CD14-positive monocyte (primary cell): ENCODE measurements at regions of chr6 and their contacts with region 1.

Region 1: GRCh38 chr6:33248925-33249731 is 22.5 kb downstream of the VPS52 start:
- DNase-seq: peak; percentile 99
- H3K4me3 ChIP-seq: peak overlapping the region; percentile 43 to 77 (median 58)
- H3K4me3 Mint-ChIP-seq: peak overlapping the region; percentile 81 to 92
- H3K27ac ChIP-seq: peak overlapping the region; percentile 92 to 93
- H3K27ac Mint-ChIP-seq: peak overlapping the region; percentile 91 to 97 (median 96)
- H3K4me1 ChIP-seq: peaks cover 24 to 29% of the 10 kb centered on the region in 2 donors
- H3K4me1 Mint-ChIP-seq: peaks cover 32% of the 10 kb centered on the region
- H3K27me3 ChIP-seq: no peaks in the 10 kb centered on the region
- H3K27me3 Mint-ChIP-seq: peaks cover 7 to 13% (median 7%) of the 10 kb centered on the region in 3 donors
- CTCF ChIP-seq: no peak

Region 2: DNA sequence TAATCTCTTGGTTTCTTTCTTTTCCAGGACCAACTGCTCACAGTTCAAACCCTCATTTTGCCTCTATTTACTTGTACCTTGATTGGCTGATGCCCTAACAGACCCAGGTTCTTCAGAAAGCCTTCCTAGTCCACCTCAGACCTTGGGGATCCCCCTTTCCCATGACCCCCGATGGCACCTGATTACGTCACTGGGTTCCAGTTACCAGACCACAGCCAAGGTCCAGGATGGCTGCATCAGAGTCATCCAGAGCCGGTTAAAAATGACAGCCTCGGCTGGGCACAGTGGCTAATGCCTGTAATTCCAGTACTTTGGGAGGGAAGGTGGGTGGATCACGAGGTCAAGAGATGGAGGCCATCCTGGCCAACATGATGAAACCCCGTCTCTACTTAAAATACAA is 244.2 kb before region 1 on chr6:
- intact Hi-C with region 1: no loop called
- DNase-seq: no peak
- H3K4me3 ChIP-seq: no peak overlapping the region
- H3K4me3 Mint-ChIP-seq: no peak overlapping the region
- H3K27ac ChIP-seq: no peak overlapping the region
- H3K27ac Mint-ChIP-seq: no peak overlapping the region
- H3K4me1 ChIP-seq: peaks cover 17 to 29% of the 10 kb centered on the region in 2 donors
- H3K4me1 Mint-ChIP-seq: peaks cover 25% of the 10 kb centered on the region
- H3K27me3 ChIP-seq: no peaks in the 10 kb centered on the region
- H3K27me3 Mint-ChIP-seq: peaks cover 5 to 15% (median 11%) of the 10 kb centered on the region in 3 donors
- CTCF ChIP-seq: no peak

Region 3: DNA sequence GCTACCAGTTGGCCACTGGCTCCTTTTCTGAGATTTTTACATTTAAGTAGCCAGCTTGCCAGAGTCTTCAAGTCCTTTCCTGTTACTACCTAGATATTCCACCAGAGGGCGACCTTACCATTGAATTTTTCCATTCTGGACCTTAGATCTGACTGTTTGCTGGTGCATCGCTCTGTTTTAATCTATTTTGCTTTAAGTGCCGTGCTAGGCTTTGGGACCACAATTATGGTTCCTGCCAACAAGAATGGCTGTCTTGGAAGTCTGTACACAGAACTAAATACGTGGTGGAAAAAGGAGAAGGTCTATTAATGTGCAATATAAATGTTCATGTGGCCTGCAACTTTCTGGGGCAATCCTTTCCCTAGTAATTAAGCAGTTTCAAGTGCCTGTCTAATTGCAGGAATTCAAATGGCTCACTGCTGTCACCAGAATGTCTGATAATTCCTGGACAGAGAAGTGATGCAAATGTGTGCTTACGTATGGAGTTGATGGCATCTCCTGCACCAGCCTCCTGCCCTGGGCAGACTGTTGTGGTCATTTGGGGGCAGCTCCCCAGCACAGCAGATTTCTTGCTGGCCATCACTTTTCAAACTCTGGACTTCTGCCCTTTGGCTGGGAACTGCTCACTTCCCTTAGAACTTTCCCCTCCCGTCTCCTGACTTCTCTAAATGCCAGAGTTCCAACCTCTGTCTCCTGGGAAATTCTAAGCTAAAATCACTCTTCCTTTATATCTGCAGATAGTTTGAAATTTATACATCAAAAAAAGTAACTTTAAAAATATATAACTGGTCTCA is 234.1 kb before region 1 on chr6:
- intact Hi-C with region 1: loop called (anchors 5 kb)
- DNase-seq: peak; percentile 79 to 82 (median 82)
- H3K4me3 ChIP-seq: no peak overlapping the region
- H3K4me3 Mint-ChIP-seq: peak overlapping the region in 1 of 2 donors; percentile 61
- H3K27ac ChIP-seq: no peak overlapping the region
- H3K27ac Mint-ChIP-seq: peak overlapping the region in 2 of 7 donors; percentile 33 to 35
- H3K4me1 ChIP-seq: peaks cover 36 to 42% of the 10 kb centered on the region in 2 donors
- H3K4me1 Mint-ChIP-seq: peaks cover 41% of the 10 kb centered on the region
- H3K27me3 ChIP-seq: no peaks in the 10 kb centered on the region
- H3K27me3 Mint-ChIP-seq: no peaks in the 10 kb centered on the region
- CTCF ChIP-seq: peak; percentile 85

Region 4: GRCh38 chr6:33118525-33119123 is 130.5 kb before region 1 on chr6:
- intact Hi-C with region 1: loop called (anchors 5 kb)
- DNase-seq: peak; percentile 37 to 78 (median 64)
- H3K4me3 ChIP-seq: no peak overlapping the region
- H3K4me3 Mint-ChIP-seq: no peak overlapping the region
- H3K27ac ChIP-seq: no peak overlapping the region
- H3K27ac Mint-ChIP-seq: no peak overlapping the region
- H3K4me1 ChIP-seq: peaks cover 32 to 37% of the 10 kb centered on the region in 2 donors
- H3K4me1 Mint-ChIP-seq: peaks cover 40% of the 10 kb centered on the region
- H3K27me3 ChIP-seq: peaks cover 17 to 21% of the 10 kb centered on the region in 2 donors
- H3K27me3 Mint-ChIP-seq: peaks cover 25 to 35% (median 29%) of the 10 kb centered on the region in 3 donors
- CTCF ChIP-seq: peak; percentile 93

Region 5: DNA sequence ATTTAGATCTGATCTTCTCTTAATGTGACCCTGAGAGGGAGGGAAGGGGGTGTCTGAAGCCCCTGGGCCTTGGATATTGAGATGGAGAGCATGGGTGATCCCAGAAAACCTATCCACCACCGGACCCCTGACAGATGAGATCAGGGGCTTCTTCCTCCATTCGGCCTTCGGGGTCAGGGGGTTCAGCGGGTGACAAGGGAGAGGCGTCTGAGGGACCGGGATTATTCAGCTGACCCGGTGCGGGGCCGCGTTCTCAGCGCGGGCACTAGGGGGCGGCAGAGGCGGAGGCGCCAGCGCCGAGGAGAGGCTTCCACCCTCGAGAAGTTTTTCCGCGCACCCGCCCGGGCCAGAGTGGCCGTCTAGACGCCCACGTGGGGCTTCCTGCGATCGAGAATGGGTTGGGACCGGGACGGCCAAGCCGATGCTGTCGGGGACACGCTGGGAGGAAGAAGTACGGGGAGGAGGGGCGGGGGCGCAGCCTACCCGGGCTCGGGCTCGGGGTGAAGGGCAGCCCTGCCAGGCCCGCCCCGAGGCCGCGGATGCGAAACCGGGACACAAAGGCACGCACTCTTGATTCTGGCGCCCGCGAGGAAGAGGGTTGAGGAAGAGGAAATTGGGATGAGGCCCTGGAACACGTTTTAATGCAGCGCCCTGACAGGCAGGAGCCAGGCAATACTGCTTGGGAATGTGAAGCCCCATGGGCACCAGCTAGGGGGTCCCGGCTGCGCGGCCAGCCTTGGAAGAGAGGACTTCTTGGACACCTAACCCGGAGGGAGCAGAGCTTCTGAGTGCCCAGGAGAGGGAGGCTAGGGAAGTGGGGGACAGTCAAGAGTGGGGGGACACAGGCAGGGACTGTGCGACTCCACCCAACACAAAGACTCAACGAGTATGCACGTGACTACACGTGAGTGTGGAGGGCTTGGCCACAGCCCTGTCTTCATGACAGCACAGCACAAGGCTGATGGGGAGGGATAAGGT is 87.5 kb before region 1 on chr6:
- intact Hi-C with region 1: loop called (anchors 5 to 10 kb)
- DNase-seq: peak; percentile 73 to 78 (median 77)
- H3K4me3 ChIP-seq: peak overlapping the region; percentile 29 to 74 (median 36)
- H3K4me3 Mint-ChIP-seq: peak overlapping the region; percentile 88 to 94
- H3K27ac ChIP-seq: no peak overlapping the region
- H3K27ac Mint-ChIP-seq: peak overlapping the region in 6 of 7 donors; percentile 6 to 83 (median 52)
- H3K4me1 ChIP-seq: peaks cover 17 to 24% of the 10 kb centered on the region in 2 donors
- H3K4me1 Mint-ChIP-seq: peaks cover 23% of the 10 kb centered on the region
- H3K27me3 ChIP-seq: no peaks in the 10 kb centered on the region
- H3K27me3 Mint-ChIP-seq: peaks cover 11 to 16% (median 13%) of the 10 kb centered on the region in 3 donors
- CTCF ChIP-seq: peak; percentile 94

Region 6: GRCh38 chr6:33213166-33213988 is 35.8 kb before region 1 on chr6:
- intact Hi-C with region 1: loop called in 1 of 2 experiments (anchors 5 kb)
- DNase-seq: peak in 1 of 3 donors; percentile 43
- H3K4me3 ChIP-seq: peak overlapping the region in 2 of 3 experiments; percentile 29 to 42
- H3K4me3 Mint-ChIP-seq: peak overlapping the region; percentile 62 to 87
- H3K27ac ChIP-seq: no peak overlapping the region
- H3K27ac Mint-ChIP-seq: peak overlapping the region in 1 of 7 donors; percentile 76
- H3K4me1 ChIP-seq: peaks cover 20 to 23% of the 10 kb centered on the region in 2 donors
- H3K4me1 Mint-ChIP-seq: peaks cover 28% of the 10 kb centered on the region
- H3K27me3 ChIP-seq: peaks cover 10 to 28% of the 10 kb centered on the region in 2 donors
- H3K27me3 Mint-ChIP-seq: peaks cover 26 to 35% (median 30%) of the 10 kb centered on the region in 3 donors
- CTCF ChIP-seq: no peak